PC-9 (cell line): ENCODE measurements at regions of chr1 and their contacts with region 1.

Region 1: GRCh38 chr1:157156058-157156541 is 17.9 kb upstream of the ETV3 start:
- DNase-seq: peak in 1 of 2 experiments; percentile 76
- H3K4me3 ChIP-seq: peak overlapping the region; percentile 38; the same call in 1 of the 2 replicates
- H3K27ac ChIP-seq: no peak overlapping the region
- H3K4me1 ChIP-seq: peaks cover 33% of the 10 kb centered on the region
- H3K27me3 ChIP-seq: 0 out of 2 replicates have a peak, but pooled peaks cover 5% of the 10 kb centered on the region
- CTCF ChIP-seq: peak; percentile 98

Region 2: GRCh38 chr1:156146020-156146768 is 1009.9 kb before region 1 on chr1:
- CTCF ChIA-PET with region 1: no interaction called
- POLR2A ChIA-PET with region 1: no interaction called
- intact Hi-C with region 1: no loop called
- DNase-seq: peak; percentile 87 to 90
- H3K4me3 ChIP-seq: no peak overlapping the region
- H3K27ac ChIP-seq: no peak overlapping the region
- H3K4me1 ChIP-seq: no peaks in the 10 kb centered on the region
- H3K27me3 ChIP-seq: peaks cover 15% of the 10 kb centered on the region; the same call in 1 of the 2 replicates
- CTCF ChIP-seq: peak; percentile 78

Region 3: DNA sequence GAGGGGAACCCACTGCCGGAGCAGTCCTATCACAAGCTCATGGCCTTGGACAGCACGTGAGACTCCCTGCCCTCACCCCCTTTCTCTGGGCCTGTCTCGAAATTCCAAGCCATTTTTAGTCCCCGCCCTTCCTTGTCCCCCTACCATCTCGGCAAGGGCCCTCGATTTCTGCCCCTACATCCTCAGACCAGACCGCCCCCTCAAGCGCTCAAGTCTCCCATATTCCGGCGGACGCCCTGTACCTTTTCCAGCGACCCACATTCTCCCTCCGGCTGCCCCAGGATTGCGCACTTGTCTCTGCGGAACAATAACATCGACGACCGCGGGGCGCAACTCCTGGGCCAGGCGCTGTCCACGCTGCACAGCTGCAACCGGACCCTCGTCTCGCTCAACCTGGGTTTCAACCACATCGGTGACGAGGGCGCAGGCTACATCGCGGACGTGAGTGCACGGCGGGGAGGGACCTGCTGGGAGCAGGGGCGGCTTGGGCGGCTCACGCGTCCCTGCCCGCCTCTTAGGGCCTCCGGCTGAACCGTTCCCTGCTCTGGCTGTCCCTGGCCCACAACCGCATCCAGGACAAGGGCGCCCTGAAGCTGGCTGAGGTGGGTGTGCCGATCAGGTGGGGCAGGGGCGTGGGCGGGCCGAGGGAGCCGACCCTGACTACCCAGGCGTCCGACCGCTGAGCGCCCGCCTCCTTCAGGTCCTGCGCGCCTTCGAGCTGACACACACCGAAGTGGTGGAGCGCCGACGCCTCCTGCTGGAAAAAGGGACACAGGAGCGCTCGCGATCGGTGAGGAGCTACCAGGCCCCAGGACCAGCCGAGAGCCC is 228.7 kb before region 1 on chr1:
- CTCF ChIA-PET with region 1: no interaction called
- POLR2A ChIA-PET with region 1: no interaction called
- intact Hi-C with region 1: loop called (anchors 10 kb)
- DNase-seq: peak; percentile 68 to 79
- H3K4me3 ChIP-seq: peak overlapping the region; percentile 64
- H3K27ac ChIP-seq: no peak overlapping the region
- H3K4me1 ChIP-seq: peaks cover 30% of the 10 kb centered on the region
- H3K27me3 ChIP-seq: no peaks in the 10 kb centered on the region
- CTCF ChIP-seq: peak; percentile 77

Region 4: DNA sequence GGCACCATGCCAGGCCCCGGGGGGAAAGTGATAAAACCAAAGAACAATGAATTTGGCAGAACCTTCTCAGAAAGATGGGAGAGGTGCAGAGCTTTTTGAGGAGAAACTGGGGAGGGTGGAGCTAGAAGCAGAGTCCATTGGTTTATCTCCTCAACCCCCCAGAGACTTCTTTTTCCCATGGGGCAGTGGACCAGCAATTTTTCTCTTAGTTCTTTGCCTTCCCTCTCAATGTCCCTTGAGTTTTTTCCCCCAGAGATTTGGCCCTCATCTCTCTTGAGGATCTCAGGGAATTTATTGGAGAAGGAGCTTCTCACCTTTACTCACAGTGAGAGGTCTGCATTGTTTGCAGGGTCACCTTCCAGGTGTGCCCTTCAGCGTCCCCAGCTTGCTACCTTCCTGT is 105.3 kb before region 1 on chr1:
- CTCF ChIA-PET with region 1: interaction called, 10 read pairs
- POLR2A ChIA-PET with region 1: no interaction called
- intact Hi-C with region 1: no loop called
- DNase-seq: no peak
- H3K4me3 ChIP-seq: no peak overlapping the region
- H3K27ac ChIP-seq: no peak overlapping the region
- H3K4me1 ChIP-seq: no peaks in the 10 kb centered on the region
- H3K27me3 ChIP-seq: 0 out of 2 replicates have a peak, but pooled peaks cover 4% of the 10 kb centered on the region
- CTCF ChIP-seq: no peak

Region 5: DNA sequence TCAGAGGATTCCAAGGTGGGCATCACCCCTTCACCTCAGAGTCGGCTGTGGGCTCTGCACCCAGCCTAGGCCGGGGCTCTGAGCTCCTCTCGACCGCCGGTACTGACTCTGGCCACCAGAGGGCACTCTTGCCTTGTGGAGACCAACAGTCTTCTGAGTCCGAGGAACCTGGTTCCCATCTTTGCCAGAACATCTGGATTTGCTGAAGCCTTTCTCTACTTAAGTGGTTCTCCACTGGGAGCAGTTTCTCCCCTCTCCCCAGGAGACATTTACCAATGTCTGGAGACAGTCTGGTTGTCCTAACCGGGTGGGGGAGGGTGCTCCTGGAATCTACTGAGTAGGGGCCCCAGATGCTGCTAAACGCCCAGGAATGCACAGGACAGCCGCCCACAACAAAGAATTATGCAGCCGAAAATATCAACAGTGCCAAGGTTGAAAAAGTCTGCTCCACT is 65.9 kb before region 1 on chr1:
- CTCF ChIA-PET with region 1: interaction called, 60 read pairs
- POLR2A ChIA-PET with region 1: no interaction called
- intact Hi-C with region 1: loop called (anchors 1 kb)
- DNase-seq: peak; percentile 62 to 76
- H3K4me3 ChIP-seq: no peak overlapping the region
- H3K27ac ChIP-seq: no peak overlapping the region
- H3K4me1 ChIP-seq: peaks cover 21% of the 10 kb centered on the region
- H3K27me3 ChIP-seq: no peaks in the 10 kb centered on the region
- CTCF ChIP-seq: peak; percentile 95

Region 6: DNA sequence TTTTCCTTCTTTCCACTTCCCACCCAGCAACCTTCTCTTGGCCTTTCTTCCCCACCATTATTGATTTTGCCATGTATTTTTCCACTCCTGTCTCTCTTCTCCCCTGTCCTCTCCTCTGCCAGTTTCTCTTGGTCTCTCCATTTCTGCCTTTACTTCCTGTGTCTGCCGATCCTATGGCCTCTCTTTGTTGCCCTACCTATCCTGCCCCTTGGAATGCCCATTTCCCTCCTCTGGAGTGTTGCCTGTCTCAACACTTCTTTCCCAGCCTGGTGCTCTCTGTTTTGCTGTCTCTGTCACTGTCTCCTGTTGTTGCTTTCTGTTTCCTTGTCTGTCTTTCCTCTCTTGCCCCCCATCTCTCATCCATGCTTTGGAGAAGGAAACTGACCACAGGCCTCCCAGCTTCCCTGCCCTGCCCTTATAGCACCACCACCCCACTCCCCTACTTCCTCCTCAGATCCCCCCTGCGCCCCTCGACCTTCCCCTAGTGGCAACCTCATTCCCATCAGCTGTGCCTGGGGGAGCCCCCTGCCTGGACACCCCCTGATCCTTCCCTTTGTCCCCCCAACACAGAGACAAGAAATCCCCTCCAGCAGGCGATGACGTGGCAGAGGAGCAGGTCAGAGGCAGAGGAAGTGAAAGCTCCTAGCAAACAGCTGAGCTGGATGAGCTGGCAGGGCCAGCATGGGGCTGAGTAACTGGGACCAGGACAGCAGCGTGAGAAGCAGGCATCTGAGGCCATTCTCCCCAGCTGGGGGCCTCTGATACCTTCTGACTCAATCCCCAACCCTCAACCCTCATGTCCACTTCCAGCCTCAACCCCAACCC is 49.9 kb before region 1 on chr1:
- CTCF ChIA-PET with region 1: interaction called, 14 read pairs
- POLR2A ChIA-PET with region 1: no interaction called
- intact Hi-C with region 1: no loop called
- DNase-seq: peak; percentile 31 to 64
- H3K4me3 ChIP-seq: no peak overlapping the region
- H3K27ac ChIP-seq: 0 out of 2 replicates have a peak overlapping the region, but pooled peaks have one; percentile 14
- H3K4me1 ChIP-seq: peaks cover 11% of the 10 kb centered on the region
- H3K27me3 ChIP-seq: no peaks in the 10 kb centered on the region
- CTCF ChIP-seq: no peak

Region 7: DNA sequence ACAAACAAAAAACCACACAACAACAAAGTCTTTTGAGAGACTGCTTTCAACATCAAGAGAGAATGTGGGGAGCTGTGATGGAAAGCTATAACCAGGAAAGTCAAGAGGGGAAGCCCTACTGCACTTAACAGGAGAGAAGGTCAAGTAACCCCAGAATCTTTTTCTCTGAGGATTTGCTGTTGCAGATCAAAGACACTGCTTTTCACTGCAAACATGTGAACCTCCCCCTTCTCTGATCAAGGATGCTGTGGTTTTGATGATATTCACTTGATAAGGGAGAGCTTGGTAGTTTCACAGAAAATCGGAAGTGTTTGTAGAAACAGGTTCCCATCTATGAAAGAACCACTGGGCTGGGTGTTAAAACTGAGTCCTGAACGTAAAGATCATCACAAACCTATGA is 22.7 kb before region 1 on chr1:
- CTCF ChIA-PET with region 1: interaction called, 8 read pairs
- POLR2A ChIA-PET with region 1: no interaction called
- intact Hi-C with region 1: loop called (anchors 2 kb)
- DNase-seq: no peak
- H3K4me3 ChIP-seq: no peak overlapping the region
- H3K27ac ChIP-seq: peak overlapping the region; percentile 58
- H3K4me1 ChIP-seq: peaks cover 59% of the 10 kb centered on the region
- H3K27me3 ChIP-seq: no peaks in the 10 kb centered on the region
- CTCF ChIP-seq: no peak